Activated CD4-positive, alpha-beta T cell treated with anti-CD3 and anti-CD28 coated beads for 36 hours (primary cell): ENCODE measurements at regions of chr6 and their contacts with region 1.

Region 1: DNA sequence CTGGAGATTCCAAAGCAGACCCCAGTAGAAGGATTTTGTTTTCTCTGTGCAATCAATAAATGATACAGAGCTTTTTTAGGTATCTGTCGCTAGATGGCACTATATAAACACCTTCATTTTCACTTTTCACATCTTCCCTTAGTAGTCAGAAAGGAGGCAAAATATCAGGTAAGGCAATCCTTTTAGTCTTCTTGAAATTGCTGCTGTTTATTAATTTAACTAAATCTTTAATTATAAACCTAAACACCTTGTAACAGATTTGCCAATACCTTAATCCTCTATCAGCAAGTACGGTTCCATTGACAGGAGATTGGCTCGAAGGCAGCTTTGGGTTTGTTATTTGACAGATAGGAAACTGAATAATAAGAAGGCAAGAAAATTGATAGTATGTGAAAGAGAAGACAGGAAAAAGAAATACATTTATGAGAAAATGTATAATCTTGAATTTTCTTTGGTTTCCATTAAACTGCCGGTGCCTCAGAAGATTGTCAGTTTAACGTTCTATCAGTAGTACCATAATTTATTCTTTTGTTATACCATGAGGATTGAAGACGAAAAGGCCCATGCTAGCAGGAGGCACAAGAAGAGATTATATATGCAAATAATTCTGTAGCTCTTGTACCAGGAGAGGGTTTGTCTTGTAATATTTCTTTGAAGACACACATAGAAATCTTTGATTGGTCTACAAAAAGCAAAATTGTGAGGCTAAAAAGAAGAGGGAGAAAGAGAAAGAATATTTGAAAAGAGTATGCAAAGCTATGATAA is 23.5 kb upstream of the IBTK start:
- DNase-seq: no peak
- ATAC-seq: peak; percentile 58
- H3K4me3 Mint-ChIP-seq: no peak overlapping the region
- H3K27ac Mint-ChIP-seq: no peak overlapping the region
- H3K4me1 Mint-ChIP-seq: no peaks in the 10 kb centered on the region
- H3K27me3 Mint-ChIP-seq: peaks cover 2% of the 10 kb centered on the region

Region 2: DNA sequence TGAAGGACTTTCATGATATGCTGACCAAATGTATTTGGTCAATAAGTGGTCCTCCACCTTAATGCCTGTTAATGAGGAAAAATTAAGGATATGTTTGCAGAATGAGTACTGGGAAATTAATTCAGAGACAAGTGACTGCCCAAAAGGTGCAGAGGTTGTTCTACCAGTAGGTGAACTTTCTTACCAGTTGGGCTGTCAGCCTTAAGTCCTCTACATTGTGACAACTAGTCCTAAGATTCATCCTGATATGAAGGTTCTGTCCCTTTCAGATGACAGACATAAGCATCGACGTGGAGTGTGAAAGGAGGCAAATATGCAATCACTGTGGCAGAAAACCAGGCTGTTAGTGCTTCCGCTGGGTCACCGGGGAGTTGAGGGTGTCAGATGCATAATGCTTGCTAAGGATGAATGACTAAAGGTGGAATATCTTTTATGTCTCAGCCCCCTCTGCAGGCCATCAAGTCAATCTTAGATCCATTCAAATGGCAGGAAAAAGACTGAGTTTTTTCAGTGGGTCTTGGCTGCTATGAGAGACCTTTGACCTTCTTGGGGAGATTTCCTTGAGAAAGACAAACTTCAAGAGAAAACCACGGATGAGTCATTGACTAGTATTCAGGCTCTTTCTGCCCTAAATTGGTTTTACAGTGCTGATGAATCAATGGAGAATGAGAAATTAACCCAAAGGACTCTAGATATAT is 318.6 kb after region 1 on chr6:
- CTCF ChIA-PET with region 1: no interaction called
- POLR2A ChIA-PET with region 1: no interaction called
- intact Hi-C with region 1: loop called in 1 of 2 experiments (anchors 1 kb)
- DNase-seq: peak; percentile 9
- ATAC-seq: peak; percentile 33
- H3K4me3 Mint-ChIP-seq: no peak overlapping the region
- H3K27ac Mint-ChIP-seq: no peak overlapping the region
- H3K4me1 Mint-ChIP-seq: no peaks in the 10 kb centered on the region
- H3K27me3 Mint-ChIP-seq: peaks cover 2% of the 10 kb centered on the region

Region 3: GRCh38 chr6:82712852-82713251 is 441.8 kb after region 1 on chr6:
- CTCF ChIA-PET with region 1: interaction called, 6 read pairs
- POLR2A ChIA-PET with region 1: no interaction called
- intact Hi-C with region 1: loop called in 1 of 2 experiments (anchors 1 kb)
- DNase-seq: no peak
- ATAC-seq: no peak
- H3K4me3 Mint-ChIP-seq: no peak overlapping the region
- H3K27ac Mint-ChIP-seq: no peak overlapping the region
- H3K4me1 Mint-ChIP-seq: no peaks in the 10 kb centered on the region
- H3K27me3 Mint-ChIP-seq: peaks cover 2% of the 10 kb centered on the region

Region 4: GRCh38 chr6:83057705-83058321 is 786.8 kb after region 1 on chr6:
- CTCF ChIA-PET with region 1: interaction called, 19 read pairs
- POLR2A ChIA-PET with region 1: no interaction called
- intact Hi-C with region 1: loop called (anchors 1 kb)
- DNase-seq: peak; percentile 40
- ATAC-seq: peak; percentile 65
- H3K4me3 Mint-ChIP-seq: no peak overlapping the region
- H3K27ac Mint-ChIP-seq: no peak overlapping the region
- H3K4me1 Mint-ChIP-seq: peaks cover 3% of the 10 kb centered on the region
- H3K27me3 Mint-ChIP-seq: no peaks in the 10 kb centered on the region

Region 5: GRCh38 chr6:83215131-83216047 is 944.3 kb after region 1 on chr6:
- CTCF ChIA-PET with region 1: interaction called, 3 read pairs
- POLR2A ChIA-PET with region 1: no interaction called
- intact Hi-C with region 1: loop called (anchors 1 to 10 kb)
- DNase-seq: peak; percentile 72
- ATAC-seq: peak; percentile 99
- H3K4me3 Mint-ChIP-seq: no peak overlapping the region
- H3K27ac Mint-ChIP-seq: no peak overlapping the region
- H3K4me1 Mint-ChIP-seq: peaks cover 2% of the 10 kb centered on the region
- H3K27me3 Mint-ChIP-seq: peaks cover 10% of the 10 kb centered on the region

Region 6: GRCh38 chr6:83514866-83515466 is 1243.9 kb after region 1 on chr6:
- CTCF ChIA-PET with region 1: no interaction called
- POLR2A ChIA-PET with region 1: no interaction called
- intact Hi-C with region 1: loop called in 1 of 2 experiments (anchors 5 kb)
- DNase-seq: peak; percentile 23
- ATAC-seq: no peak
- H3K4me3 Mint-ChIP-seq: no peak overlapping the region
- H3K27ac Mint-ChIP-seq: no peak overlapping the region
- H3K4me1 Mint-ChIP-seq: peaks cover 4% of the 10 kb centered on the region
- H3K27me3 Mint-ChIP-seq: peaks cover 30% of the 10 kb centered on the region